ENCODE measurements at regions of chr17 and their contacts with region 1.

Region 1: GRCh38 chr17:22694362-22695227 is 1002.3 kb downstream of the KCNJ18 start:
- DNase-seq: peak; percentile 7
- ATAC-seq: no peak
- H3K4me3 Mint-ChIP-seq: no peak overlapping the region
- H3K27ac Mint-ChIP-seq: no peak overlapping the region
- H3K4me1 Mint-ChIP-seq: no peaks in the 10 kb centered on the region
- H3K27me3 Mint-ChIP-seq: no peaks in the 10 kb centered on the region

Region 2: GRCh38 chr17:22533744-22534143 is 160.9 kb before region 1 on chr17:
- CTCF ChIA-PET with region 1: no interaction called
- POLR2A ChIA-PET with region 1: no interaction called
- intact Hi-C with region 1: loop called in 1 of 2 experiments (anchors 10 kb)
- DNase-seq: no peak
- ATAC-seq: no peak
- H3K4me3 Mint-ChIP-seq: no peak overlapping the region
- H3K27ac Mint-ChIP-seq: no peak overlapping the region
- H3K4me1 Mint-ChIP-seq: no peaks in the 10 kb centered on the region
- H3K27me3 Mint-ChIP-seq: no peaks in the 10 kb centered on the region